Activated naive CD4-positive, alpha-beta T cell treated with anti-CD3 and anti-CD28 coated beads for 36 hours (primary cell): ENCODE measurements at regions of chr9 and their contacts with region 1.

Region 1: DNA sequence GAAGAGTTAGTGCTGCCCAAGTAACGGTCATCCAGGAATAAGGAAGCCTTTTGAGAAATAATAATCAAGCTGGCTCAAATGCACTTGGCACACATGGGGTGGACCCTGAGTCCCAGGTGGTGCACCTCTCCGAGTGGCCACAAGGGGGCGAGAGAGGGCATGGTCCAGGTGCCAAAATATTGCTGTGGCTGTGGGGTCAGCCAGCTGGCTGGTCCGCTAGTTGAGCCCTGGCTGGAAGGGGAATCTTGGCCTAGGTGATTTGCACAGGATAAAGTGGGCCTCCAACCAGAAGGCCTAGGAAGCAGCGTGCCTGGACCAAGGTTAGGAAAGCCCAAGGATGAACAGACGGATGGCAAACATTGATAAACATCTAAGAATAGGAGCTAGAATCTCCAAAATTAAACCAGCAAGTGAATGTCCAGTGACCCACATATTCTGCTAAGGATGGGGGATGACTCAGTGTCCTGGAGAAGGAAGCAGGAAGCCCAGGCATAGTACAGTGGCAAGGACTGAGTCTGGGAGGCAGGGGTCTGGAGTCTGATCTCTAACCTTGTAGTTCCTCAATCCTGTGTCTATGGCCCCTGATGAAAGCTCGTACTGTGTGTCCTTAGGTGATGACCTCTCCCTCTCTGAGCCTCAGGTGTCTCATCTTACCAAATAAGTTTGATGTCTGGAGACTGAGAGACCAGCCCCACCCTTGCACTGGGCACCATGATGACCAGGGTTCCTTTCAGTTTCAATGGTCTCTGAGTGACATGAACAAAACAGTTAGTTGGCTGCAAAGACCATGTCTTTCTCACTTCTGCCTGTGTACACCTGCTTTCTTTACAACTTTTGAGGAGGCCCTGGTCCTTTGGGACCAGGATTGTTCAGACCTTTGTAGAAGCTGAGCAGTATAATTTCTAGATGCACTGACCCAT is 19.2 kb upstream of the SHB start:
- DNase-seq: peak; percentile 78
- H3K4me3 Mint-ChIP-seq: no peak overlapping the region
- H3K27ac Mint-ChIP-seq: no peak overlapping the region
- H3K4me1 Mint-ChIP-seq: no peaks in the 10 kb centered on the region
- H3K27me3 Mint-ChIP-seq: no peaks in the 10 kb centered on the region

Region 2: GRCh38 chr9:37897665-37898064 is 190.6 kb before region 1 on chr9:
- CTCF ChIA-PET with region 1: no interaction called
- intact Hi-C with region 1: no loop called
- DNase-seq: no peak
- H3K4me3 Mint-ChIP-seq: no peak overlapping the region
- H3K27ac Mint-ChIP-seq: no peak overlapping the region
- H3K4me1 Mint-ChIP-seq: peaks cover 8% of the 10 kb centered on the region
- H3K27me3 Mint-ChIP-seq: no peaks in the 10 kb centered on the region

Region 3: DNA sequence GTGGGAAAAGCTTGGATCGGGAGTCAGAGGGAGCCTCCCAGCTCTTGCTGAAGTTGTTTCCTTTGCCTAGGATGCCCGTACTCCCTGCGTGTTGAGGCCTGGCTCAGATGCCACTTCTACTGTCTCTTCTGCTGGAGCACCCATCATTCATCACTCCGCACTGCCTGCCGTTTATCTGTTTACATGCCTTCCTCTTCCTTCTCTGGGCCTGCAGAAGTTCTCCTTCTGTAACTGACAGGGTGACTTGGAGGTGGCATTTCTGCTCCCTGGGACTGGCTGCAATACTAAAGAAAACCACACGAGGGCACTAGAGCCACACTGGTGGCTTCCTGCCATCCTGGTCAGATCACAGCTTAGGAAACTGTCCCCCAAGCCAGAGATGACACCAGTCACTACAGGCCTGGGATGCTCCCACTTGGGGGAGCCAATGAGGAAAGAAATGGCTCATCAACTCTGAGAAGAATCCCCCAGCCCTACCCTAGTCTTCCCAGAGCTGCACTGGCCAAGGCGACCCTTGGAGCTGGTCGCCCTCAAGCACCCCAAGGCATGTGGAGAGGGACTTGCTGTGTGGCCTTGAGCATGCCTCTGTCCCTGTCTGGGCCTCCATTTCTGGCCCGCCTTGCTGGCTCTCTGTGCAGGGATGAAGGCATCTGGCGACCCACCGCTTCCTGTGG is 174.6 kb before region 1 on chr9:
- CTCF ChIA-PET with region 1: interaction called, 26 read pairs
- intact Hi-C with region 1: loop called (anchors 1 kb)
- DNase-seq: peak; percentile 89
- H3K4me3 Mint-ChIP-seq: no peak overlapping the region
- H3K27ac Mint-ChIP-seq: no peak overlapping the region
- H3K4me1 Mint-ChIP-seq: peaks cover 2% of the 10 kb centered on the region
- H3K27me3 Mint-ChIP-seq: no peaks in the 10 kb centered on the region

Region 4: DNA sequence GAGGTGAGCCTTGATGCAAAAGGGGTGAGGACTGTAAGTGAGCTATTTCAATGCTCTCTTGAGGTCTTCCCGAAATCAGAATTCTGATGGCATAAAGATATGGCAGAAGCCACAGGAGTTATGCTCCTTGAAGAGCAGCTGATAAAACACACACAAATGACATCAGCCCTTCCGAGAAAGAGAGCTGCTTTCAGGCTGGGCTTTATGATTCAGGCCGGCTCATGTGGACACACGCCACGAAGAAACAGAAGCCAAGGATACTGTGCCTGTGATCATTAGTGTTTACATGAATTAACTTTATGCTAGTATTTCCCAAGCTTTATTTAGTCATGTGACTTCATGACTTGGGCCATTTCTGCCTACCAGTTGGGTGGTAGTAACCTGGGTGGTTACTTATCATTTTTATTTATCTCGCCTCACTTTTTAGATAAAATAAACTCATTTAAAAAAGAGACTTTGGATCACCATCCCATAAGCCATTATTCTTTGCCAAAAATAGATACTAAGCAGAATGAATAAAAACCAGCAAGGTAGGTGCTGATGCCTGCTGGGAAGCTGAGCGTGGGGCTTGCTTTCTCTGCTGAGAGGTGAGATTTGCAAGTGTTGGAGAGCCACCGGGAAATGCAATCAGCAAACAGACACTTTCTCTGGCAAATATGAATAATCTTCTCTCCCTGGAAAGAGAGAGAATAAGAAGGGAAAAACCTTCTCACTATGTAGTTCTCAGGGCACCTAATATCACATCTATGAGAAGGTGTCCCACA is 111.4 kb before region 1 on chr9:
- CTCF ChIA-PET with region 1: no interaction called
- intact Hi-C with region 1: no loop called
- DNase-seq: no peak
- H3K4me3 Mint-ChIP-seq: no peak overlapping the region
- H3K27ac Mint-ChIP-seq: no peak overlapping the region
- H3K4me1 Mint-ChIP-seq: no peaks in the 10 kb centered on the region
- H3K27me3 Mint-ChIP-seq: no peaks in the 10 kb centered on the region

Region 5: GRCh38 chr9:38141746-38142591 is 53.7 kb after region 1 on chr9:
- CTCF ChIA-PET with region 1: no interaction called
- intact Hi-C with region 1: no loop called
- DNase-seq: no peak
- H3K4me3 Mint-ChIP-seq: no peak overlapping the region
- H3K27ac Mint-ChIP-seq: no peak overlapping the region
- H3K4me1 Mint-ChIP-seq: no peaks in the 10 kb centered on the region
- H3K27me3 Mint-ChIP-seq: peaks cover 17% of the 10 kb centered on the region

Region 6: DNA sequence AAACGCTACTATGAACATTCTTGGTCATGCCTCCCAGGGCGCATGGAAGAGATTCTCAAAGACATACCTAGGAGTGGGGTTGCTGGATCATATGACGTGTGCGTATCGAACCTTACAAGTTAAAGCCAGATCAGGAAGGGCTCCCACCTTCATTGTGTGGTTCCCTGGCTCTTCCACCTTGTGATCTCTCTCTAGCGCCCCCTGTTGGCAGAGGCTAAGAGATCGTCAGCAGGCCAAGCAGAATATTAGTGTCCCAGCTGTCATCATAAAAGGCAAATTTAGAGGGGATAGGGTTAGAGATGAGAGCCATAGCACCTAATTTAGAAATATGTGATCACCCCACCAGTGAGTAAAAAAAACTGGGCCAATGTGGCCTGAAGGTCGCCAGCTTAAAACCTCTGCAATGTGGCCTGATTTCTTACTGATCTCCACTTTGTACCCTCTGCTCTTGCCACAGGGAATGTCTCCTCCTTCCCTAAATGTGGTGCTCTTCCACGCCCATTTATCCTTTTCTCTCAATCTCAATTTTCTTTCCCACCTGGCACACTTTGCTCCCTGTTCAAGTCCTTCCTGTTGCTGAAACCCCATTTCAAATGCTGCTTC is 72.4 kb after region 1 on chr9:
- CTCF ChIA-PET with region 1: interaction called, 5 read pairs
- intact Hi-C with region 1: loop called (anchors 2 kb)
- DNase-seq: peak; percentile 79
- H3K4me3 Mint-ChIP-seq: no peak overlapping the region
- H3K27ac Mint-ChIP-seq: no peak overlapping the region
- H3K4me1 Mint-ChIP-seq: no peaks in the 10 kb centered on the region
- H3K27me3 Mint-ChIP-seq: no peaks in the 10 kb centered on the region

Region 7: GRCh38 chr9:38263532-38263931 is 175.3 kb after region 1 on chr9:
- CTCF ChIA-PET with region 1: no interaction called
- intact Hi-C with region 1: loop called (anchors 5 kb)
- DNase-seq: no peak
- H3K4me3 Mint-ChIP-seq: no peak overlapping the region
- H3K27ac Mint-ChIP-seq: no peak overlapping the region
- H3K4me1 Mint-ChIP-seq: no peaks in the 10 kb centered on the region
- H3K27me3 Mint-ChIP-seq: peaks cover 14% of the 10 kb centered on the region

Region 8: DNA sequence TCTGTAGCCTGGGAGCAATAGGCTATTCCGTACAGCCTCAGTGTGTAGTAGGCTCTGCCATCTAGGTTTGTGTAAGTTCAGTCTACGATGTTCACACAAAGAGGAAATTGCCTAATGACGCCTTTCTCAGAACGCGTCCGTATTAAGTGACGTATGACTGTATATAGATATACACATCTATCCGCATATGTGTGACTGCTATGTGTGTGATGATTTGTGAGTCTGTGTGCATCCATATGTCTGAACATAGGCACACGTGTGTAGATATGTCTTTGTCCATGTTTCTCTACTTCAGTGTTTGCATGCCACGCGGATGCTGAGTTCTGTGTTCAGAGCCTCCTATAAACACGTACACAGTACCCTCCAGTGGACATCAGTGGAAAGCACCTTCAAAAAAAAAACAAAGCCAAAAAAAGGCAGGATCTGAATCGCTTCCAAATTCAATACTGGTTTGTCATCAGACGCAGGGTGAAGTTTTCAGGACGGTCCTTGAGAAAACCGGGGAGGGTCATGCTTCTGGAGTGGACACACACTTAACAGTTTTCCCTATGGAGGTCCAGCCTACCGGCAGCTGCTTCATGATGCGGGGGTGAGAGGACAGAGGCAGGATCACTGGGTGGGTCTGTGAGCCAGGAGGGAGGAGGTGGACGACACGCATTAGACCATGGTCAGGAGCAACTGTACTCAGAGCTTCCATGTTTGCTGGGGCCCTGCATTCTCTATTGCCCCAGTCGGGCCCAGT is 274.8 kb after region 1 on chr9:
- CTCF ChIA-PET with region 1: interaction called, 3 read pairs
- intact Hi-C with region 1: loop called (anchors 1 kb)
- DNase-seq: peak; percentile 41
- H3K4me3 Mint-ChIP-seq: peak overlapping the region; percentile 58
- H3K27ac Mint-ChIP-seq: no peak overlapping the region
- H3K4me1 Mint-ChIP-seq: peaks cover 5% of the 10 kb centered on the region
- H3K27me3 Mint-ChIP-seq: peaks cover 2% of the 10 kb centered on the region

Region 9: DNA sequence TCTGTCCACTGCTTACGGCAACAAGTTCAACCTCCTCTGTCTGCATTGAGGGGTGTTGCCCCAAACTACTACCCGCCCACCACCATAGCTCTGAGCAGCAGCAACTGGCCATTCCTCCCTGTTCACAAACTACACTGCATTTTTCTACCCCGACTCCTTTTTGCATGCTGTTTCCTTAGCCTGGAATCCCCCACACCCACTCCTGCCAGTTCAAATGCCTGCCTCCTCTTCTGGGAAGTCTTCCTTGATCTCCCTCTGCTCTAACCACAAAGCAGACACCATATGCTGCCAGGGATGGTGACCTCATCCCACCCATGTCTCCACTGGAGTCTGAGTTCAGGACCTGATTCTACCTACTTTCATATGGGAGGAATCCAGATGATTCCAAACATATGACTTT is 317.5 kb after region 1 on chr9:
- CTCF ChIA-PET with region 1: interaction called, 3 read pairs
- intact Hi-C with region 1: loop called (anchors 1 kb)
- DNase-seq: no peak
- H3K4me3 Mint-ChIP-seq: no peak overlapping the region
- H3K27ac Mint-ChIP-seq: no peak overlapping the region
- H3K4me1 Mint-ChIP-seq: no peaks in the 10 kb centered on the region
- H3K27me3 Mint-ChIP-seq: peaks cover 3% of the 10 kb centered on the region